Sigmoid colon (tissue), 7 donors: ENCODE measurements at regions of chr17 and their contacts with region 1.

Region 1: DNA sequence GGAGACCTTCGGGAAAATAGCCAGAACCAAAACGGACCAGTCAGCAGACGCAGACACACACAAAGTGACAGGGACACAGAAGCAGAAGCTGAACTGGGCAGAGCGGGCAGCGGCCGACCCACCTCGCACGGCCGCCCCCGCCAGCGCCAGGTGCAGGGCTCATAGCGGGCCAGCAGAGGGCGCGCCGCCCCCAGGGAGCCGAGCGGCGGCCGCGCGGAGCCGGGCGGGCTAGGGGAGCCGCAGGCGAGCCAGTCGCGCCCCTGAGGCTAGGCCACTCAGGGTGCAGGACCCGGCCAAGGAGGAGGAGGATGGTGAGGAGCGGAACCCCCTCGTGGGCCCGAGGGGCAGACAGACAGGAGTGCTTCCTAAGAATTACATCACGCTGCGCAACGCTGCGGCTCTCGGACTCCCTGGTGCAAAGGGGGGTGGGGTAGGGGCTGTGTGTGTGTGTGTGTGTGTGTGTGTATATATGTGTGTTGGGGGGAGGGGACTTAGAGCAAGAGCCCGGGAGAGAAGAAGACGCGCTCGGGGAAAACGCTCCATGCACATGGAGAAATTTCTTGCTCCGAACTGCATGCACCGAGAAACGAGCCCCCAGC is 913 bp upstream of the NOG start:
- DNase-seq: no peak
- H3K4me3 ChIP-seq: peak overlapping the region; percentile 19 to 58 (median 50)
- H3K27ac ChIP-seq: peak overlapping the region in 1 of 4 donors; percentile 73
- H3K4me1 ChIP-seq: peaks cover 0 to 52% (median 44%) of the 10 kb centered on the region in 4 donors
- H3K27me3 ChIP-seq: peaks cover 23 to 85% (median 49%) of the 10 kb centered on the region in 3 donors
- CTCF ChIP-seq: peak in 3 of 4 experiments; percentile 37 to 96 (median 38)
- EP300 ChIP-seq: no peak
- POLR2A ChIP-seq: no peak

Region 2: DNA sequence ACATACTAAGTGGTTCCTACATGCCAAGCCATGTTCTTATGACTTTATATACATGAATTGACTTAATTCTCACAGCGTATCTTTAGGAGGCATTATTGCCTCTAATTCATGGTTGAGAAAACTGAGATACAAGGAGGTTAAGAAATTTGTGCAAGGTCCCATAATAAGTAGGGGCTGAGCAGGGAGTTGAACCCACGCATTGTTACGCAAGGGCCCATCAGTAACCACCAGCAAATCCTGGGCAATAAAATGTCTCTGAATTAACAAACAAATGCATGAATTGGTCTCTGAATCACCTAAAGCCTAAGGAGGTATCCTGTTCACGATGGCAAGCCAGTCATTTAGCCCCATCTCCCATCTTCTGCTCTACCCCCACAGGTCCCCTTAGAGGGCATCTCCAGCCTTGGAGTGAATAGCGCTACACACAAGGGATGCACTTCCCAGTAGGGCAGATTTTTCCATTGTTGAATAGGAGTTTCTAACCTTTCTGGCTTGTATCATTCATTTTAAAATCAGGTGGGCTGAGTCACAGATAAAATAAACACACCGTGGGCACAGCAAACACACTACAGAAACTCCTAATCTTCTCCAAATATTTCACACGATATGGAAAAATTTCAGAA is 200.4 kb before region 1 on chr17:
- intact Hi-C with region 1: no loop called
- DNase-seq: no peak
- H3K4me3 ChIP-seq: no peak overlapping the region
- H3K27ac ChIP-seq: no peak overlapping the region
- H3K4me1 ChIP-seq: no peaks in the 10 kb centered on the region
- H3K27me3 ChIP-seq: no peaks in the 10 kb centered on the region
- CTCF ChIP-seq: no peak
- EP300 ChIP-seq: no peak
- POLR2A ChIP-seq: no peak

Region 3: GRCh38 chr17:56679115-56679766 is 86.7 kb after region 1 on chr17:
- intact Hi-C with region 1: loop called (anchors 2 kb)
- DNase-seq: no peak
- H3K4me3 ChIP-seq: peak overlapping the region in 3 of 4 donors; percentile 27 to 30 (median 28)
- H3K27ac ChIP-seq: no peak overlapping the region
- H3K4me1 ChIP-seq: peaks cover 0 to 11% (median 10%) of the 10 kb centered on the region in 4 donors
- H3K27me3 ChIP-seq: peaks cover 3 to 46% (median 19%) of the 10 kb centered on the region in 3 donors
- CTCF ChIP-seq: peak in 3 of 4 experiments; percentile 25 to 58 (median 54)
- EP300 ChIP-seq: no peak
- POLR2A ChIP-seq: no peak

Region 4: DNA sequence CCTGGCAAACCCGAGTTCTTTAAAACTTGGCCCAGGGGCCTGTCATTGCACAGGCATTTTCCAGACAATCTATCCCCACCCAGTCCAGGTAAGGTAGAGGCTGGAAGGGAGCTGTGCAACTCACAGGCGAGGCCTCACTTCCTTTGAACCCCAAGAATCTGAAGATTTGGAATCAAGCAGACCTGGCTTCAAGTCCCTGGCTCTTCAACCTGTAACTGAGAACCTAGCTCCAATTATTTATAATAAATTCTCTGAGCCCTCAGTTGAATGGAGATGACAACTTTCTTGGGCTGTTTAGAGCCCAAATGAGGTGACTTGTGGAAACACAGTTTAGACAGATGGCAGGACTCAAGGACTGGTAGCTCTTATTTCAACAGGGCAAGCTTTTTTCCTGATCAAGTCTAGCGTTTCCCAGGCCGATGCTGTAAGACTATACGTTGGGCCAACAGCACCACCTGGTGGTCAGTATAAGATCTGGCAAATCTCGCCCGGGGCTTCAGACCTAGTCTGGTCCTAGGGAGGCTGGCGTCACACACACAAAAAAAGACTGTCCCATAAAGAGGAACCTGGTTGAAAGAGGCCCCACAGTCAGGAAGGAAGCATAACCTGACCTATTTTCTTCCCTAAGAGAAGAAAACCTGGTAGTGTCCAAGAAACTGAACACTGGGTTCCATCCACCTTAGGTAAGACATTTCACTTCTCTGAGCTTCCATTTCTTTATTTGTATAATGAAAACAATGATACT is 123.2 kb after region 1 on chr17:
- intact Hi-C with region 1: loop called (anchors 1 kb)
- DNase-seq: peak; percentile 89
- H3K4me3 ChIP-seq: no peak overlapping the region
- H3K27ac ChIP-seq: no peak overlapping the region
- H3K4me1 ChIP-seq: no peaks in the 10 kb centered on the region
- H3K27me3 ChIP-seq: no peaks in the 10 kb centered on the region
- CTCF ChIP-seq: peak; percentile 42 to 82 (median 70)
- EP300 ChIP-seq: no peak
- POLR2A ChIP-seq: no peak

Region 5: GRCh38 chr17:56762988-56763387 is 170.4 kb after region 1 on chr17:
- intact Hi-C with region 1: no loop called
- DNase-seq: no peak
- H3K4me3 ChIP-seq: no peak overlapping the region
- H3K27ac ChIP-seq: no peak overlapping the region
- H3K4me1 ChIP-seq: no peaks in the 10 kb centered on the region
- H3K27me3 ChIP-seq: no peaks in the 10 kb centered on the region
- CTCF ChIP-seq: no peak
- EP300 ChIP-seq: no peak
- POLR2A ChIP-seq: no peak

Region 6: DNA sequence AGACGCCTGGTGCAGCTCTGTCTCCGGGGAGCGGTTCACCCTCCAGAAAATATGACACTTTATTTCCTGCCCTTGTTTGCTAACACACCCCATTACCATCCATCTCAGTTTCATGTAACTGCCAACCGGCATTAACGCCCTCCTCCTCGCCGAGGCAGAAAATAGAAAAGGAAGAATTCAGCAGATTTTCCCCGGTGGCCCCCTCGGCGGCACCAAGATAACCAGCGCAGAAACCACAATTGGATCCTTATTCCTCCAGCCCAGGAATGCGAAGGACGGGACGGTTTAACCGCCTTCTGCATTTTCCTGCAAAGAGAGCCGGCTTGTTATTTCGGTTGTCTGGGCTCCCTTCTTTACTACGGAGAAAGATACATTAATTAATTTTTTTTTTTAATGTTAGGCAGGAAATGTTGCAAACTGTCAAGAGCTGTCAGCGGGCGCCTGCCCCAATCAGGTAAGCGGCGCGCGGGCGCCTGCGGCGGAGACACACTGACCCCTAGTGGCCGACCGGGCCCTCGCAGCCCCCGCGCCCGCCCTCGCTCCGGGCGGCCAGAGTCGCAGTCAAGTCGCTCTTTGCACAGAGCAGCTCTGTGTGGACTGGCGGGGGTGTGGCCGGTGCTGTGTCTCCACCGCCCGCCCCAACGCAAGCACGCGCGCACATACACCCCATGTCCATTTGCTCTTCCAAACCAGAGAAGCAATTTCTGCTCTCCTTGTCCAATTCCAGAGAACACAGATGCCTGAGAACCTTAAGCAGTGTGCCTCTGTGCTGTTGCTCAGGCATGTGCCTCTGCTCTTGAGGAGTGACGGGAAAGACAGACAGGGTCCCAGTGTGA is 187.5 kb after region 1 on chr17:
- intact Hi-C with region 1: loop called (anchors 1 kb)
- DNase-seq: peak; percentile 81
- H3K4me3 ChIP-seq: peak overlapping the region in 3 of 4 donors; percentile 9 to 36 (median 31)
- H3K27ac ChIP-seq: no peak overlapping the region
- H3K4me1 ChIP-seq: peaks cover 0 to 12% (median 4%) of the 10 kb centered on the region in 4 donors
- H3K27me3 ChIP-seq: peaks cover 0 to 43% (median 4%) of the 10 kb centered on the region in 3 donors
- CTCF ChIP-seq: peak; percentile 64 to 97 (median 78)
- EP300 ChIP-seq: no peak
- POLR2A ChIP-seq: no peak